Heart right ventricle (tissue), 16 donors: ENCODE measurements at regions of chr17 and their contacts with region 1.

Region 1: DNA sequence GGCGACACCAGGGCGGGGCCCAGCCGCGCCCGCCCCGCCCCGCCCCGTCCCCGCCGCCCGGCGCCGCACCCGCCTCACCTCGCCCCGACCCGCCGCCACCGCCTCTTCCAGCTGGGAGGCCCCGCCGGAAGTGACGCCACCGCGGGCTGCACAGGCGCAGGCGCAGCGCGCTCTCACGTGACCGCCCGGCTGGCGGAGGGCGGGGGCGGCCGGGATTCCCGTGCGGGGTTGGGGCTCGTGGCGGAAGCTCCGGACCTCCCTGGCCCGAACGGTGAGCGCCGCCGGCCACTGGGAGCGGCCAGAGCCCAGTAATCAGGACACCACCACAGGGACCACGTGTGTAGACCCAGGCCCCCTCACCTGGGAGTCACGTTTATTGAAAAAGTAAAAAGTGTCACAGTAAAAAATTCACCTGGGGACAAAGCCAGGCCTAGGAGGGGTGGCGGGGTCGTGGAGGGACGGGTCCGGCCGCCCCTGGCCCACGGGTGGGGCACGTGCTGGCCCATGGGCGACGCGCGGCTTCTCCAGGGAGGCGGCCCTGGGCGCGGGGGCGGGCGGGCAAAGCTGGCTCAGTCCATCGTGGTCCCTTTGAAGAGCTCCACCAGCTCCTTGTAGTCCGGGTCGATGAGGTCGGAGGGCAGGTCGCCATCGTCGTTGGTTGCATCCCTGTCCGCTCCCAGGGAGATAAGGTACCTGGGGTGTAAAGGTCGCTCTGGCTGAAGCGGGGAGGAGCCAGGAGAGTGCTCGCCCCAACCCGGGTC is at the start of gene MCRIP1:
- DNase-seq: peak; percentile 94 to 97
- ATAC-seq: peak; percentile 85 to 96 (median 94)
- H3K4me3 ChIP-seq: peak within 1 kb of the TSS; percentile 77 to 94 (median 90)
- H3K27ac ChIP-seq: peak within 1 kb of the TSS; percentile 72 to 99 (median 94)
- H3K4me1 ChIP-seq: peaks cover 12 to 36% (median 28%) of the 10 kb centered on the region in 9 donors
- H3K27me3 ChIP-seq: no peaks in the 10 kb centered on the region
- CTCF ChIP-seq: no peak
- total RNA-seq, gene MCRIP1: 75.1 to 105 (median 88.8) TPM

Region 2: DNA sequence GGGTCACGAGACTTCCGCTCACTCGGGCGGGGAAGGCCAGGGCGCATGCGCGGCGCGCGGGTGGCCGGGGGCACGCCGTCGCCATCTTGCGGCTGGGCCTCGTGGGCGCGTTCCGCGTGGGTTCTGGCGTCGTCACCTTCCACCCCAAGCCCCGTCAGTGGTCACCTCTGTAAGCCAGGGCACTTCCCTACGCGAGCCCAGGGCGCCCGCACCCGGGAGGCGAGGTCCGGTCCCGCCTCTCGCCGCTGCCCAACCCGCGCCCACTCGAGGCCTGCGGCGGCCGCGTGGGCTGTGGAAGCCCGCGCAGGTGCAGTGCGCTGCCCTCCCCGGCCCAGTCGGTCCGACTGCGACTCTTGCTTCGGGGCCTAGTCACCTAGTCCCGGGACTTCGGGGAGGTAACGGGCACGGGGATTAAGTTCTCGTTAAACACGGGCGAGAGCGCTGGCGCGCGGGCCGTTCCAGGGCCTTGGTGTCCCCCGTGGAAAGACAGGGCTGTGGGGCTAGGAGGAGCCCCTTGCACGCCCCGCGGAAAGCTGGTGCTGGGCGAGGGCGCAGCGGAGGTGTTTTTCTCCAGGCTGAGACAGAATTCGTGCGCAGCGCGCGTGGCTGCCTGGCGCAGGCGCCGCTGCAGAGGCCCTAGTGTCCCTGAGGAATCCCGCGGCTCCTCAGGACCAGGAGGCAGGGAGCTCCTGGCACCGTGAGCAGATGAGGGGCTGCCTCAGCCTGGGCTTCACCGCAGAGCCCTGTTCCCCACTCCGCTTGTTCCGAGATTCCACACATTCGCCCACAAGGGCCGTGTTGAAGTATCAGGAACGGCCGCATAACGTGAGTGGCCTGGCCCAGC is 38.3 kb after region 1 on chr17:
- intact Hi-C with region 1: loop called in 1 of 10 experiments (anchors 5 kb)
- DNase-seq: peak; percentile 94 to 97
- ATAC-seq: peak; percentile 30 to 55 (median 43)
- H3K4me3 ChIP-seq: peak overlapping the region; percentile 62 to 99 (median 90)
- H3K27ac ChIP-seq: peak overlapping the region; percentile 94 to 99 (median 98)
- H3K4me1 ChIP-seq: peaks cover 22 to 59% (median 49%) of the 10 kb centered on the region in 9 donors
- H3K27me3 ChIP-seq: no peaks in the 10 kb centered on the region
- CTCF ChIP-seq: peak in 8 of 9 donors; percentile 20 to 70 (median 46)